MCF 10A (cell line): ENCODE measurements at regions of chr6 and their contacts with region 1.

Region 1: GRCh38 chr6:126033696-126034095 is 47.4 kb downstream of the TRMT11 start:
- DNase-seq: peak; percentile 68
- H3K4me3 Mint-ChIP-seq: no peak overlapping the region
- H3K27ac Mint-ChIP-seq: peak overlapping the region; percentile 69
- H3K4me1 Mint-ChIP-seq: peaks cover 12% of the 10 kb centered on the region
- H3K27me3 Mint-ChIP-seq: no peaks in the 10 kb centered on the region
- CTCF ChIP-seq: peak; percentile 68

Region 2: DNA sequence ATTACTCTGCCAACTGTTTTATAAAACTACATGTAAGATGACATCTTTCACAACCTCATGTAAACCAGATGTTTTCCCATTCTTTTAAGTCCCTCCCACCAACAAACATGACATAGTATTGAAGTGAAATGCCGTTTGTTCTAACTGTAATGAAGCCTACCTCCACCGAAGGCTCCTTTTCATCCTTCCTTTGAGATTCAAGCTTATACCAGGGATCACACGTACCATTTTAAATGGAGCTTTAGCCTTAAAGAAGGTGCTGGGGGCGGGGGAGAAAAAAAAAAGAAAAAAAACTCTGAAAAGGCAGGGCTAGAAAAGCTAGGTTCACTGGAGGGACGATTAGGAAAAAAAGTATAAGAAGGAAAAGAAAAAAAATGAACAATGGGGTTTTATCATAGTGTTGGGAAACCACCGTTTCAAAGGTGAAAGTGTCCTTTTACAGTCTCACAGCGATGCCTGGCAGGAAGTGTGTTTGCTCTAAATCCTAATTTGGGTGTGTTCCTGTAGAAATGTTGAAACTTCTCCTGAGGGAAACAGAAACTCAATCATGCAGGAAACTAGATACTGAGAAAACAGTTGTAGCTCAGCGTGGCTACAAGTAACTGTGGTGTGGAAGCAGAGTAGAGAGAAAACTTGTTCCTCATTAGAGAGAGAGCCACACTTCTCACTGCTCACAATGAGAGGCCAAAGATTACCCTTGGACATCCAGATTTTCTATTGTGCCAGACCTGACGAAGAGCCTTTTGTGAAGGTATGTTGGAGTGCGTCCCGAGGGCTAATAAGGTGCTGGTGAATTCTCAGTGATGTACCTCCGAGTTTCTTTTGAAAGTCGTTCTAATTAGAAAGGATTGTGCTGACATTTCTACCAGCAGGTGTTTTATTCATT is 114.8 kb before region 1 on chr6:
- CTCF ChIA-PET with region 1: no interaction called
- POLR2A ChIA-PET with region 1: no interaction called
- intact Hi-C with region 1: no loop called
- DNase-seq: peak; percentile 97
- H3K4me3 Mint-ChIP-seq: peak overlapping the region; percentile 90
- H3K27ac Mint-ChIP-seq: peak overlapping the region; percentile 99
- H3K4me1 Mint-ChIP-seq: peaks cover 47% of the 10 kb centered on the region
- H3K27me3 Mint-ChIP-seq: no peaks in the 10 kb centered on the region
- CTCF ChIP-seq: no peak

Region 3: GRCh38 chr6:125995972-125996580 is 37.6 kb before region 1 on chr6:
- CTCF ChIA-PET with region 1: interaction called, 11 read pairs
- POLR2A ChIA-PET with region 1: no interaction called
- intact Hi-C with region 1: no loop called
- DNase-seq: peak; percentile 85
- H3K4me3 Mint-ChIP-seq: peak overlapping the region; percentile 47
- H3K27ac Mint-ChIP-seq: no peak overlapping the region
- H3K4me1 Mint-ChIP-seq: peaks cover 20% of the 10 kb centered on the region
- H3K27me3 Mint-ChIP-seq: no peaks in the 10 kb centered on the region
- CTCF ChIP-seq: peak; percentile 82

Region 4: GRCh38 chr6:126170978-126171382 is 137.3 kb after region 1 on chr6:
- CTCF ChIA-PET with region 1: interaction called, 4 read pairs
- POLR2A ChIA-PET with region 1: no interaction called
- intact Hi-C with region 1: loop called (anchors 1 kb)
- DNase-seq: peak; percentile 60
- H3K4me3 Mint-ChIP-seq: no peak overlapping the region
- H3K27ac Mint-ChIP-seq: no peak overlapping the region
- H3K4me1 Mint-ChIP-seq: no peaks in the 10 kb centered on the region
- H3K27me3 Mint-ChIP-seq: no peaks in the 10 kb centered on the region
- CTCF ChIP-seq: peak; percentile 53

Region 5: DNA sequence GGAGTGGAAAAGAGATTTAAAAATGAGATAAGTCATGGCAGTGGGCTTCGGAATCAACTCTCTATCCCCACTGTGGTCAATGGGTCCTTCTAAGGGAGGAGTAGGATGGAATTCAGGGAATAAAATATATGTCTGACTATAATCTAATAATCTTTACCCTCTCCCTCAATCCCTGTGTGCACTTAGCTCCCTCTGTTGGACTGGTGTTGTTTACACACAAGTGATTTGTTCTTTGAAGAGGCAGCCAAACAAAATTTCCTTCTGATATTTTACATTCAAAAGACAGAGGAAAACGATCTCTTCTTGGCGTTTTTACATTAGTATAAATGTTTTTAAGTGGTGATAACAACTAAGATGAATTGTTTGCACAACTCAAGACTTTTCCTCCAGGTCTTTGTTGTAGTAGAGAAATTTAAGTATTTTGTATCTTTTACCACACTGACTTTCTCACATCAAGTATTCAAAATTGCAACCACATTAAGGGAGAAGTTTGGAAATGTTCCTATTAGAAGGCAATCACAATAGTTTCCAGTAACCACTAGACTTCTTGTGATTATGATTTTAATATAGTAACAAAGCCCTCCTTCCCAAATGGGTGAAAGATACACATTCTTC is 624.0 kb after region 1 on chr6:
- CTCF ChIA-PET with region 1: interaction called, 3 read pairs
- POLR2A ChIA-PET with region 1: no interaction called
- intact Hi-C with region 1: loop called (anchors 2 kb)
- DNase-seq: peak; percentile 52
- H3K4me3 Mint-ChIP-seq: no peak overlapping the region
- H3K27ac Mint-ChIP-seq: no peak overlapping the region
- H3K4me1 Mint-ChIP-seq: no peaks in the 10 kb centered on the region
- H3K27me3 Mint-ChIP-seq: peaks cover 24% of the 10 kb centered on the region
- CTCF ChIP-seq: peak; percentile 66

Region 6: DNA sequence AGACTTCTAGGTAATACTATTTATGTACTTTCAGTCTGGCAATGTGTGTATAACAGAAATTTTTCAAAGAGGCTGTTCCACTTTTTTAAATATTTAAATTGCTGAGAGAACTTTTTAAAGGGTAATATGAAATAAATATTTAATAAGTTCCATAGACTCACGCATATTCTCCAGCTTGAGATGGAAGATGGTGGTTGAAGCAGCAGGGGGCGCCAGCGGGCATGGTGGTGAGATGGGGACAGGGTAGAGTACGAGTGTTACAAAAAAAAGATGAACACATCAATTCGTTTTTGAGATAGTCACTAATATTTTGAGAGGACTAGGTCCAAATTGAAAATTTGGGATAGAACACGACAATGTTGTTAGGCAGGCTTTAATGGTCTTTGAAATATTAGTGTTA is 1153.2 kb after region 1 on chr6:
- CTCF ChIA-PET with region 1: no interaction called
- POLR2A ChIA-PET with region 1: no interaction called
- intact Hi-C with region 1: loop called (anchors 10 kb)
- DNase-seq: peak; percentile 53
- H3K4me3 Mint-ChIP-seq: no peak overlapping the region
- H3K27ac Mint-ChIP-seq: no peak overlapping the region
- H3K4me1 Mint-ChIP-seq: no peaks in the 10 kb centered on the region
- H3K27me3 Mint-ChIP-seq: peaks cover 55% of the 10 kb centered on the region
- CTCF ChIP-seq: peak; percentile 30